CD8-positive, alpha-beta T cell (primary cell): ENCODE measurements at regions of chr15 and their contacts with region 1.

Region 1: GRCh38 chr15:99076552-99077308 is 28.1 kb upstream of the SYNM start:
- DNase-seq: peak in 8 of 9 experiments; percentile 20 to 79 (median 40)
- ATAC-seq: peak; percentile 71
- H3K4me3 ChIP-seq: peak overlapping the region; percentile 43 to 45
- H3K4me3 Mint-ChIP-seq: peak overlapping the region; percentile 81
- H3K27ac ChIP-seq: no peak overlapping the region
- H3K27ac Mint-ChIP-seq: no peak overlapping the region
- H3K4me1 ChIP-seq: peaks cover 3% of the 10 kb centered on the region
- H3K4me1 Mint-ChIP-seq: peaks cover 7% of the 10 kb centered on the region
- H3K27me3 ChIP-seq: no peaks in the 10 kb centered on the region
- H3K27me3 Mint-ChIP-seq: peaks cover 9% of the 10 kb centered on the region
- CTCF ChIP-seq: peak; percentile 83

Region 2: DNA sequence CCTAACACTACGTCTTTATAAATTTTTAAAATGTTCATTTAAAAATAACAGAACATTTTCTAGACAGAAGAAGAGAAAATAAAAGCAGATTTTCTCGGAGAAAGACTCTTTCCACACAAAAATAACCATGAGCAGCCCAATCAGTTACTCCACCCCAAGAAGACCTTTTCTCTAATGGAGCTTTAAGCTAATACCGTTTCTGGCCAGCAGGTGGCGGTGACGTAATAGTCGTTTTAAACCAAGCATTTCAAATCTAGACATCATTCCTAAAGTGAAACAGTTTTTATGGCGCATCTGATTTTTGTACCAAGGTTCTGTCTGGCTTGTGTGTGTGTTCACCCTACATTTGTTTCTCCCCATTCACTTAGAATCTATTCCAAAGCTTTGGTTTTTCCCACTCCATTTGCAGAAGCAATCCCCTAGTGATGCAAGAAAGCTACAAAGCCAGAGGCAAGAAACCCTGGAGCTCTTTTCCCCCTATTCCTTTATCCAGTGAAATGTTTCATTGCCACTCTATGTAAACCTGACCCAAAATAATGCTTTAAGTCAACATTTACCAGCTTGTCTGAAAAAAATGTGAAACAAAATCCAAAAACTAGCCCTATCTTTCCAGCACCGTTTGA is 765.1 kb before region 1 on chr15:
- CTCF ChIA-PET with region 1: interaction called, 3 read pairs
- POLR2A ChIA-PET with region 1: no interaction called
- intact Hi-C with region 1: loop called in 1 of 2 experiments (anchors 5 kb)
- DNase-seq: peak; percentile 33 to 78 (median 59)
- ATAC-seq: no peak
- H3K4me3 ChIP-seq: no peak overlapping the region
- H3K4me3 Mint-ChIP-seq: no peak overlapping the region
- H3K27ac ChIP-seq: no peak overlapping the region
- H3K27ac Mint-ChIP-seq: no peak overlapping the region
- H3K4me1 ChIP-seq: no peaks in the 10 kb centered on the region
- H3K4me1 Mint-ChIP-seq: no peaks in the 10 kb centered on the region
- H3K27me3 ChIP-seq: no peaks in the 10 kb centered on the region
- H3K27me3 Mint-ChIP-seq: peaks cover 22% of the 10 kb centered on the region
- CTCF ChIP-seq: peak; percentile 91

Region 3: DNA sequence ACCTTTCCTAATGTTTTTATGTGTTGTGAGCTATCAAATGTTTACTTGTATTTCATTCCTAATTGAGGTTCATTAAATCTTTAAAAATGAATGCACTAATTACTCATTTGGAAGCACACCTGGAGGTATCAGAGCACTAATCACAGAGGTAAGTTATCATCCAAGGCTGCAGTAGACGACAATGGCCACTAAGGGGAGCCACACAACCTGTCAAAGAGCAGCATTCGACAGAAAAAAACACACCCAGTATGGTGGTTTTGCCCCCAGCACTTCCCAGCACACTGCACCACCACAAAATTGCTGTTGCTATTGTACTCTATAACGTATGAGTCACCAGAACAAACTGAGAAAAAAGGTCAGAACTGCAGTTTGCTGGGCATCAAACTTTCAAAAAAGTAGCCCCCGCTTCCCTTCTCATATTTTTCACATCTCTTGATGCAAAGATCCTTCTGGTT is 634.3 kb before region 1 on chr15:
- CTCF ChIA-PET with region 1: interaction called, 4 read pairs
- POLR2A ChIA-PET with region 1: no interaction called
- intact Hi-C with region 1: loop called (anchors 1 to 10 kb)
- DNase-seq: peak in 7 of 9 experiments; percentile 31 to 64 (median 54)
- ATAC-seq: peak; percentile 79
- H3K4me3 ChIP-seq: no peak overlapping the region
- H3K4me3 Mint-ChIP-seq: no peak overlapping the region
- H3K27ac ChIP-seq: no peak overlapping the region
- H3K27ac Mint-ChIP-seq: no peak overlapping the region
- H3K4me1 ChIP-seq: no peaks in the 10 kb centered on the region
- H3K4me1 Mint-ChIP-seq: no peaks in the 10 kb centered on the region
- H3K27me3 ChIP-seq: no peaks in the 10 kb centered on the region
- H3K27me3 Mint-ChIP-seq: peaks cover 6% of the 10 kb centered on the region
- CTCF ChIP-seq: peak; percentile 60

Region 4: DNA sequence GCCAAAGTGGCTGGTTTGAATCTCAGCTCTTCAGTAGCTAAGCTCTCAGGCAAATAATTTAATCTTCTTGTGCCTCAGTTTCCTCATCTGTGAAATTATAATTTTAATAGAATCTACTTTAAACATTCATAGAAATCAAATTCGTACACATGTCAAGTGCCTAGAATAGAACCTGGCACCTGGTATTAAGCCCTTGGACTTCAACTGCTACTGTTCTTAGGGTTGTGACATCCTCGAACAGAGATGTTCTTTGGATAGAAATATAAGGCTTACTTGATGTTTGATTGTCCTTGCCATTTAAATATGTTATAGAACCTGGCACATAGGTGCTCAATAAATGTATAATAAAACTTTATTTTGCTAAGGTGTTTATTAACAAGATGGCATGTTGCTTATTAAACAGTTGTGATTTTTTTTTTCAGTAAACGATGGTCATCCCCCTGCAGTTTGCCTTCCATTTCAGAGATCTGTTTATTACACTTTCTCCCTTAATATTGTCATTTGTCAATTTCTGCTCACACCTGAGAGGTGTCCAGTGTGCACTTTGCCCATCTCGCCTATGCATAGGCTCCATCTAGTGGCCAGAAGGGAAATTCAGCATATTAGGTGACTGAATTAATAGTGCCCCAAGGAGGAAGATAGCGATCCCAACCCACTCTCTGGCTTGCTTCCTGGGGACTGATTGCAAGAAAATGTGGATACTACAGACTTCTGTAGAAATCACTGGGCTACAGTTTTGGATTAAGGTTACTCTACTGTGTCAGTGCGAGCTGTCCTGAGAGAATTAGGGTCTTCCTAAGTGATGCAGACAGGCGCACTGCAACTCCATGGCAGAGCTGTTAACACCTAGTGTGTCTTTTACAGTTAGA is 417.7 kb before region 1 on chr15:
- CTCF ChIA-PET with region 1: no interaction called
- POLR2A ChIA-PET with region 1: no interaction called
- intact Hi-C with region 1: loop called in 1 of 2 experiments (anchors 1 kb)
- DNase-seq: peak in 6 of 9 experiments; percentile 7 to 70 (median 36)
- ATAC-seq: peak; percentile 66
- H3K4me3 ChIP-seq: no peak overlapping the region
- H3K4me3 Mint-ChIP-seq: no peak overlapping the region
- H3K27ac ChIP-seq: no peak overlapping the region
- H3K27ac Mint-ChIP-seq: no peak overlapping the region
- H3K4me1 ChIP-seq: peaks cover 21% of the 10 kb centered on the region
- H3K4me1 Mint-ChIP-seq: peaks cover 52% of the 10 kb centered on the region
- H3K27me3 ChIP-seq: no peaks in the 10 kb centered on the region
- H3K27me3 Mint-ChIP-seq: peaks cover 1% of the 10 kb centered on the region
- CTCF ChIP-seq: peak; percentile 96

Region 5: GRCh38 chr15:99059010-99059981 is 17.4 kb before region 1 on chr15:
- CTCF ChIA-PET with region 1: interaction called, 14 read pairs
- POLR2A ChIA-PET with region 1: no interaction called
- intact Hi-C with region 1: no loop called
- DNase-seq: peak in 8 of 9 experiments; percentile 3 to 65 (median 34)
- ATAC-seq: peak; percentile 69
- H3K4me3 ChIP-seq: peak overlapping the region; percentile 36 to 49
- H3K4me3 Mint-ChIP-seq: peak overlapping the region; percentile 65
- H3K27ac ChIP-seq: no peak overlapping the region
- H3K27ac Mint-ChIP-seq: no peak overlapping the region
- H3K4me1 ChIP-seq: no peaks in the 10 kb centered on the region
- H3K4me1 Mint-ChIP-seq: peaks cover 12% of the 10 kb centered on the region
- H3K27me3 ChIP-seq: peaks cover 10 to 20% of the 10 kb centered on the region in 2 experiments
- H3K27me3 Mint-ChIP-seq: peaks cover 55% of the 10 kb centered on the region
- CTCF ChIP-seq: peak; percentile 61